Activated CD4-positive, alpha-beta T cell treated with anti-CD3 and anti-CD28 coated beads, Interleukin-2, amount 10 ng/mL, durations not matched to agents 24 days and 14 days (primary cell): ENCODE measurements at regions of chr2 and their contacts with region 1.

Region 1: DNA sequence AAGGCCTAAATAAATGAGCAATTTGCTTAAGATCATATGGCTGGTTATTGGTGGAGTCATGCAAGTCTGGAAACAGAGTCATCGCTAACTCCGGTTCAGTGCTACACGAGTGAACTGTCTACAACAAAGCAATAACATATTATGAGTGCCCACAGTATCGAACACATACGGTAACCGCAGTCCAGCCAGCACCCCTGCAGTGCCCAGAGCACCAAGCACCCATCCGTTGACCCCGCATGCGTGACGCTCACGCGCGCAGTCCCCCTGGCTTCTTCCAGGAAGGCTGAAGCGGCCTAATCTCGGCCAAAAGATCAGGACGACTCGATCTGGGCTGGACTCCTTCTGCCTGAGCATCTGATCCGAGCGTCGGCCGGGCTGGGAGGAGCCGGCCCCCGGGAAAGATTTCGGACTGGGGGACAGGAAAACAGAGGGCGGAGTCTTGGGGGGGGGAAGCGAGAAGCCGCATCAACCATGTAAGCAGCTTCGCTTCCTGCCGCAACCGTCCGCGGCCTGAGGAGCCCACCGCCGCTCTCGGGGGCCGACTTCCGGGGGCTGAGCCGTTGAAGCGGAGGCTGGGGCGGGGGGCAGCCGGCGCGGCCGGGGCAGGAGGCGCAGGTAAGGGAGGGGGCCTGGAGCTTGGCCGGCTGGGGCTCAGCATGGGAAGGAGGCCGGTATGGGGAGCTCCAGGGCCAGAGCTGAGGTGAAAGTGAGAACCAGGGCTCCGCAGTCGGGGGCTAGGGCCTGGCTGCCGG is at the start of gene PIKFYVE:
- DNase-seq: peak; percentile 97
- H3K4me3 Mint-ChIP-seq: peak within 1 kb of the TSS; percentile 95
- H3K27ac Mint-ChIP-seq: peak within 1 kb of the TSS; percentile 94
- H3K4me1 Mint-ChIP-seq: peaks cover 36% of the 10 kb centered on the region
- H3K27me3 Mint-ChIP-seq: no peaks in the 10 kb centered on the region
- total RNA-seq, gene PIKFYVE: 27.3 and 29.4 TPM in 2 replicates

Region 2: GRCh38 chr2:207710814-207711740 is 554.9 kb before region 1 on chr2 and contains the start of gene CCNYL1:
- intact Hi-C with region 1: loop called (anchors 2 kb)
- DNase-seq: peak; percentile 99
- H3K4me3 Mint-ChIP-seq: peak within 1 kb of the TSS; percentile 100
- H3K27ac Mint-ChIP-seq: peak within 1 kb of the TSS; percentile 88
- H3K4me1 Mint-ChIP-seq: peaks cover 23% of the 10 kb centered on the region
- H3K27me3 Mint-ChIP-seq: no peaks in the 10 kb centered on the region
- total RNA-seq, gene CCNYL1: 6.1 and 8.7 TPM in 2 replicates

Region 3: GRCh38 chr2:207746131-207746530 is 519.8 kb before region 1 on chr2:
- intact Hi-C with region 1: no loop called
- DNase-seq: peak; percentile 83
- H3K4me3 Mint-ChIP-seq: no peak overlapping the region
- H3K27ac Mint-ChIP-seq: no peak overlapping the region
- H3K4me1 Mint-ChIP-seq: no peaks in the 10 kb centered on the region
- H3K27me3 Mint-ChIP-seq: no peaks in the 10 kb centered on the region

Region 4: DNA sequence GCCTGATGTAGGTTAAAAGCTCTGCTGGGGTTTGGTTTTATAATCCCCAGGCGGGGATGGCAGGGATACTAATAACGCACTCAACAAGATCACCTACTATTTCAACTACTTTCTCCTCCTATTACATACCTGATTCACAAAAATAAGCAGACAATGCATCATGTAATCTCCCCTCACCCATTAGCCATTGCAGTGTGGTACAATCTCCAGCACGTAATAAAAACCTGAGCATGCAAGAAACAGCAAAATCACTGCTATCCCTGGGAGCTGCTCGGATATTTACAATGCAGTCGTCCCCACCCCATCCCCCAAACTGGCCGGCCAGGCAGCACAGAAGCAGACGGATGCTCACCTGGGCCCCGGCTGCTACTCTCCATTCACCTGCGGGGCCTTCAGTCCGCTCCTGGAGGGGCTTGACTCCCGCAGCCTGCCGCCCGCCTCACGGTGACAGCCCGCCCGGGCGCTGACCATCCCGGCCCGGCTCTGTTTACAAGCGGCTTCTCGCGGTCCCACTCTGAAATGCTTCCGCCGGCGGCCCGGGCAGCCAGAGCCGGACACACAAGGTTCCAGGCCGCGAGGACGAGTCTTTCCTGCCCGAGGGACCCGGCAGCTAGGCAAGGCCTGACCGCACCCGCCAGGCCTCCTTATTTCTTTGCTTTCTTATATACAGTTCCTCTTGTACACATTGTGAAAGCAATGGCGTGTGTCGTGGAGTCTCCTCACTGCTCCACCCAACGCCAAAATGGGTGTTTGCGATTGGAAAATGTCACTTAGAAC is 240.8 kb before region 1 on chr2 and contains the start of gene PLEKHM3:
- intact Hi-C with region 1: loop called (anchors 5 kb)
- DNase-seq: peak; percentile 94
- H3K4me3 Mint-ChIP-seq: peak within 1 kb of the TSS; percentile 93
- H3K27ac Mint-ChIP-seq: peak within 1 kb of the TSS; percentile 84
- H3K4me1 Mint-ChIP-seq: peaks cover 10% of the 10 kb centered on the region
- H3K27me3 Mint-ChIP-seq: no peaks in the 10 kb centered on the region
- total RNA-seq, gene PLEKHM3: 5.8 and 6.6 TPM in 2 replicates

Region 5: GRCh38 chr2:208254871-208255556 is 11.0 kb before region 1 on chr2 and contains the start of gene IDH1:
- intact Hi-C with region 1: loop called (anchors 1 kb)
- DNase-seq: peak; percentile 98
- H3K4me3 Mint-ChIP-seq: peak within 1 kb of the TSS; percentile 97
- H3K27ac Mint-ChIP-seq: peak within 1 kb of the TSS; percentile 81
- H3K4me1 Mint-ChIP-seq: peaks cover 20% of the 10 kb centered on the region
- H3K27me3 Mint-ChIP-seq: peaks cover 5% of the 10 kb centered on the region
- total RNA-seq, gene IDH1: 25.4 and 26.0 TPM in 2 replicates

Region 6: GRCh38 chr2:208319391-208319790 is 53.4 kb after region 1 on chr2:
- intact Hi-C with region 1: loop called (anchors 2 kb)
- DNase-seq: no peak
- H3K4me3 Mint-ChIP-seq: no peak overlapping the region
- H3K27ac Mint-ChIP-seq: no peak overlapping the region
- H3K4me1 Mint-ChIP-seq: peaks cover 11% of the 10 kb centered on the region
- H3K27me3 Mint-ChIP-seq: no peaks in the 10 kb centered on the region

Region 7: DNA sequence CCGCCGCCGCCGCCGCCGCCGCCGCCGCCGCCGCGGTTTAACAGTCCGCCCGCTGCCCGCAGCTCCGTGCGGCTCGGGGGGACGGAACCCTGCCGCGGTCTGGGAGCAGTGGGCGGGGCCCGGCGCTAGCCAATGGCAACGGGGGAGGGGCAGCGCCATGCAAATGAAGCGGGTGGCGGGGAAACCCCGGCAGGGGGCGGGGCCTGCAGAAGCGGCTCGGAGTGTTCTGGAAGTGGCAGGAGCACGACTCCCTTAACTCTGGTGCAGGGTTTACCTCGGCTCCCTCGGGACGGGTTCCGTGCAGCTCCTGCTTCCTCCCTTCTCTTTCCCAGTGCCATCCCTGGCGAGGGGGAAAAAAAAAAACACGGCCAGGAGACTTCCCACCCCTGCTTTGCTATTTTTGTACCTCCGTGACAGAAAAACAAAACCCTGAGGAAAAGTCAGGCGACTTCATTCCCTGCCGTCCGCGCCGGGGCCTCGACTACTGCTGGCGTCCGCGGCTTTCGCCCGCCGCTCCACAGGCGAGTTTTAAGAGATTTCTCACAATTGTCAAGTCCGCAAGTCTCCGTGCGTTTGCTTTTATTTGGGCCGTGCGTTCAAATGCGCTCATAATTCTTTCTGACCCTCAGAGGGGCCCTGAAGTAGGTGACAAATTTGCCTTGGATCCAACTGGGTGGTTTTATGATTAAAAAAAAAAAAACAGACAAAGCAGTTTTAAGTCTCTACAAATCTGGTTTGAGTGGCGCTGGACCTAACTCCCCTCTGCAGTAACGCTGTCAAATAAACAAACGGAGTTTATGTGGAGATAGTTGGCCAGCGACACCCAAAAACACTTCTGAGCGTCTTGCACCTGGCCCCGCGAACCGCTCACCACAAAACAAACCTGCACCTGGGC is 1905.6 kb after region 1 on chr2 and contains the start of gene KANSL1L:
- intact Hi-C with region 1: loop called (anchors 1 kb)
- DNase-seq: peak; percentile 99
- H3K4me3 Mint-ChIP-seq: peak within 1 kb of the TSS; percentile 98
- H3K27ac Mint-ChIP-seq: peak within 1 kb of the TSS; percentile 99
- H3K4me1 Mint-ChIP-seq: peaks cover 25% of the 10 kb centered on the region
- H3K27me3 Mint-ChIP-seq: peaks cover 27% of the 10 kb centered on the region
- total RNA-seq, gene KANSL1L: 4.6 and 5.0 TPM in 2 replicates